Activated naive CD4-positive, alpha-beta T cell treated with anti-CD3 and anti-CD28 coated beads, Interleukin-2, amount 10 ng/mL, durations not matched to agents 7 days and 5 days (primary cell): ENCODE measurements at regions of chr13 and their contacts with region 1.

Region 1: GRCh38 chr13:52954838-52955237 is 73.8 kb upstream of the OLFM4 start:
- DNase-seq: no peak
- H3K4me3 Mint-ChIP-seq: no peak overlapping the region
- H3K27ac Mint-ChIP-seq: no peak overlapping the region
- H3K4me1 Mint-ChIP-seq: no peaks in the 10 kb centered on the region
- H3K27me3 Mint-ChIP-seq: no peaks in the 10 kb centered on the region

Region 2: DNA sequence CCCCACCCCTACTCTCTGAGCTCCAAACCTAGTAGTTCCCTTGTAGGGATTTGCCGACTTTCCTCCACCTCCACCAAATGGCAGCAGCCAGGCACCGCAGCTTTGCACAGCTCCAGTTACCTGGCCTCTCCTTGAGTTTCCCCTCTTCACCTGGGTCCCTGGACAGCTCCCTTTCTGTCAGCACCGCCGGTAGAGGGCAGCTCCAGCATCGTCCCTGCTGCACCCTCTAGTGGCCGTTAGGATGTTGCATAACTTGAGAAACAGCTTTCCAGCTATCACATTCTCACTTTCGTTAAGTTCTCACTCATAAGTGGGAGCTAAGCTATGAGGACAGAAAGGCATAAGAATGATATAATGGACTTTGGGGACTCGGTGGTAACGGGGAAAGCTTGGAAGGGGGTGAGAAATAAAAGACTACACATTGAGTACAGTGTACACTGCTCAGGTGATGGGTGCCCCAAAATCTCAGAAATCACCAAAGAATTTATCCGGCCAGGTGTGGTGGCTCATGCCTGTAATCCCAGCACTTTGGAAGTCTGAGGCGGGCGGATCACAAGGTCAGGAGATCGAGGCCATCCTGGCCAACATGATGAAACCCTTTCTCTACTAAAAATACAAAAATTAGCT is 13.3 kb after region 1 on chr13:
- CTCF ChIA-PET with region 1: interaction called, 19 read pairs
- DNase-seq: peak; percentile 76
- H3K4me3 Mint-ChIP-seq: no peak overlapping the region
- H3K27ac Mint-ChIP-seq: no peak overlapping the region
- H3K4me1 Mint-ChIP-seq: no peaks in the 10 kb centered on the region
- H3K27me3 Mint-ChIP-seq: peaks cover 9% of the 10 kb centered on the region